Activated CD8-positive, alpha-beta T cell treated with anti-CD3 and anti-CD28 coated beads, Interleukin-2, amount 10 ng/mL, durations not matched to agents 7 days and 5 days (primary cell): ENCODE measurements at regions of chr12 and their contacts with region 1.

Region 1: GRCh38 chr12:122500685-122501488 is at the start of gene ZCCHC8:
- DNase-seq: peak; percentile 99
- ATAC-seq: peak; percentile 95
- H3K4me3 Mint-ChIP-seq: peak within 1 kb of the TSS; percentile 99
- H3K27ac Mint-ChIP-seq: peak within 1 kb of the TSS; percentile 99
- H3K4me1 Mint-ChIP-seq: peaks cover 34% of the 10 kb centered on the region
- H3K27me3 Mint-ChIP-seq: no peaks in the 10 kb centered on the region
- total RNA-seq, gene ZCCHC8: 41.3 to 45.3 TPM

Region 2: DNA sequence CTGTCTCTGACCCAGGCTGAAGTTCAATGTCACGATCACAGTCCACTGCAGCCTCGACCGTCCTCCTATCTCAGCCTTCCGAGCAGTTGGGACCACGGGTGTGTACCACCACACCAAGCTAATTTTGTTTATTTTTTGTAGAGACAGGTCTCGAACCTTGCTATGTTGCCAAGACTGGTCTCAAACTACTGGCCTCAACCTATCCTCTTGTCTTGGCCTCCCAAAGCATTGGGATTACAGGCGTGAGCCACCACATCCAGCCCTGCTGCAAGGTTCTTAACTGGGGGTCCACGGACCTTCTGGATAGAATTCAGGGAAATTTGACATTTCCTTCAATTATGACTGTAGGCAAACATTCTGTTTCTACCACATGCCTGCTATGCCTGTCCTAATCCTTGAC is 37.1 kb before region 1 on chr12:
- CTCF ChIA-PET with region 1: no interaction called
- POLR2A ChIA-PET with region 1: no interaction called
- DNase-seq: no peak
- ATAC-seq: no peak
- H3K4me3 Mint-ChIP-seq: no peak overlapping the region
- H3K27ac Mint-ChIP-seq: no peak overlapping the region
- H3K4me1 Mint-ChIP-seq: peaks cover 2% of the 10 kb centered on the region
- H3K27me3 Mint-ChIP-seq: no peaks in the 10 kb centered on the region

Region 3: DNA sequence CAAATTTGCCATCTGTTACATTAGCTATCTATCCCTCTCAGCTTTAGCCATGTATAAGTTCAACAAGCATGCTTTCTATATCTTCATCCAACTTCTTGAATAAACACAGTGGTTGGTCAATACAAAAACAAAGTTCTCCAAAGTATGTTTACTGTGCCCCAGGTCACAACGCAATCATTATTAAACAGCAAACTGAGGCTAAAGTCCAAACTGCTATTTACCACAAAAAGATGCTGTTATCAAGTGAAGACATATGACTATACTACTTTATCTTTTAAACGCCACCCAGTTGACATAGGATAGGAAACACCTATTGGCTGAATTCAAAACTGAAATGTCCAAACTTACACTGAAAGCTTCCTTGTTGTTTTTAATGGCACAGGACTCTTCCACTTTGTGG is 11.8 kb before region 1 on chr12:
- CTCF ChIA-PET with region 1: interaction called, 9 read pairs
- POLR2A ChIA-PET with region 1: interaction called, 10 read pairs
- DNase-seq: no peak
- ATAC-seq: no peak
- H3K4me3 Mint-ChIP-seq: no peak overlapping the region
- H3K27ac Mint-ChIP-seq: no peak overlapping the region
- H3K4me1 Mint-ChIP-seq: peaks cover 3% of the 10 kb centered on the region
- H3K27me3 Mint-ChIP-seq: no peaks in the 10 kb centered on the region

Region 4: DNA sequence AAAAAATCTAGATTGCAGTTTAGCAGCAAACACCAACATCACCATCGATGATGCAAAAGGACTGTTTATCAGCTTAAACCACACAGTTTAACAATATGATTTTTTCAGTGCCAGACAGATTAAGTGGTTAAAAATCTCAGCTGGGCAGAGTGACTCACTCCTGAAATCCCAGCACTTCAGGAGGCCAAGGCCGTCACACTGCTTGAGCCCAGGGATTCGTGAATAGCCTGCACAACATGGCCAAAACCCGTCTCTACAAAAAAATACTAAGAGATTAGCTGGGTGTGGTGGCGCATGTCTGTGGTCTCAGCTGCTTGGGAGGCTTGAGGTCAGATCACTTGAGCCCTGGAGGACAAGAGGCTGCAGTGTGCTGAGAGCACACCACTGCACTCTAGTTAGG is 17.0 kb after region 1 on chr12:
- CTCF ChIA-PET with region 1: interaction called, 7 read pairs
- POLR2A ChIA-PET with region 1: interaction called, 187 read pairs
- DNase-seq: no peak
- ATAC-seq: no peak
- H3K4me3 Mint-ChIP-seq: no peak overlapping the region
- H3K27ac Mint-ChIP-seq: no peak overlapping the region
- H3K4me1 Mint-ChIP-seq: peaks cover 37% of the 10 kb centered on the region
- H3K27me3 Mint-ChIP-seq: no peaks in the 10 kb centered on the region

Region 5: GRCh38 chr12:122526683-122527477 is 26.0 kb after region 1 on chr12 and contains the starts of genes KNTC1 and RSRC2:
- CTCF ChIA-PET with region 1: interaction called, 14 read pairs
- POLR2A ChIA-PET with region 1: interaction called, 187 read pairs
- DNase-seq: peak; percentile 100
- ATAC-seq: peak; percentile 94
- H3K4me3 Mint-ChIP-seq: no peak within 1 kb of the TSS
- H3K27ac Mint-ChIP-seq: no peak within 1 kb of the TSS
- H3K4me1 Mint-ChIP-seq: peaks cover 39% of the 10 kb centered on the region
- H3K27me3 Mint-ChIP-seq: no peaks in the 10 kb centered on the region
- total RNA-seq, gene KNTC1: 139 to 147 TPM
- total RNA-seq, gene RSRC2: 96.1 to 106 TPM

Region 6: GRCh38 chr12:122767691-122768090 is 266.8 kb after region 1 on chr12:
- CTCF ChIA-PET with region 1: no interaction called
- POLR2A ChIA-PET with region 1: no interaction called
- DNase-seq: no peak
- ATAC-seq: no peak
- H3K4me3 Mint-ChIP-seq: no peak overlapping the region
- H3K27ac Mint-ChIP-seq: no peak overlapping the region
- H3K4me1 Mint-ChIP-seq: no peaks in the 10 kb centered on the region
- H3K27me3 Mint-ChIP-seq: no peaks in the 10 kb centered on the region